Gastrocnemius medialis (tissue), 4 donors: ENCODE measurements at regions of chr2 and their contacts with region 1.

Region 1: DNA sequence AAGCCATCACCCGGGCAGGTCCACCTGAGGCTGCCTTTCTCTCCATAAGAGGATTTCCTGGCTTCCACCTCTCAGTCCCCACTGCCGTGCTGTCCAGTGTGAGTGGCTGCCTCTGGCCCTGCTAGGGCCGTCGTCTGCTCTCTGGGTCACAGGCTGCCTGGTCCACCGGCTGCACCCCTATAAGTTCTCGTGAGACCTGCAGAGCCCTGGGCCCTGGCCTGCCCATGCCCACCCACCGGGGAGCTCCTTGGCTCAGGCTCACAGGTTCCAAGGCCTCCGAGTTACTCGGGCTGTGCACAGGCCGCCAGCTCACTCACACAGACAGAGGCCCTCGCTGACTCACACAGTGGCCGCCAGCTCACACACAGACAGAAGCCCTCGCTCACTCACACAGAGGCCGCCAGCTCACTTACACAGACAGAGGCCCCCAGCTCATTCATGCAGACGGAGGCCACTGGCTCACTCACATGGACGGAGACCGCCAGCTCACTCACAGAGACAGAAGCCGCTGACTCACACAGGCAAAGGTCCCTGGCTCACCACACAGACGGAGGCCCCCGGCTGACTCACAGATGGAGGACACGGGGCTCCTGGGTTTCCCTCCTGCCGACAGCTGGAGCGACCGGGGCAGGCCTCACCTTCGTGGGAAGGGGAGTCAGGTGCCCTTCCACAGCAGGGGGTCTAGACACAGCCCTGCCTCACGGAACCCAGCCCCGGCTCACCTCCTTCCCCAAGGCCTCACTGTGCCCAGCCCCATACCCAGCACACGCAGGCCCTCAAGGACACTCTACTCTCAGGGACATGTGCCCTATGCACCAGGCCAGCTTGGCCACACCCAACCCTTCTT is 334.1 kb upstream of the MYT1L start:
- DNase-seq: peak in 1 of 2 donors; percentile 28
- ATAC-seq: no peak
- H3K4me3 ChIP-seq: no peak overlapping the region
- H3K27ac ChIP-seq: no peak overlapping the region
- H3K4me1 ChIP-seq: peaks cover 19 to 27% of the 10 kb centered on the region in 2 donors
- H3K27me3 ChIP-seq: no peaks in the 10 kb centered on the region
- CTCF ChIP-seq: no peak
- POLR2A ChIP-seq: no peak

Region 2: GRCh38 chr2:2769481-2770431 is 104.5 kb after region 1 on chr2:
- in situ Hi-C with region 1: no loop called
- intact Hi-C with region 1: loop called (anchors 5 kb)
- DNase-seq: peak; percentile 89 to 95
- ATAC-seq: peak; percentile 99 to 100
- H3K4me3 ChIP-seq: peak overlapping the region in 3 of 4 donors; percentile 9 to 38 (median 13)
- H3K27ac ChIP-seq: peak overlapping the region; percentile 82 to 94 (median 87)
- H3K4me1 ChIP-seq: peaks cover 12 to 16% of the 10 kb centered on the region in 2 donors
- H3K27me3 ChIP-seq: no peaks in the 10 kb centered on the region
- CTCF ChIP-seq: peak; percentile 35 to 66 (median 59)
- POLR2A ChIP-seq: peak; percentile 35 to 55